CD8-positive, alpha-beta memory T cell (primary cell): ENCODE measurements at regions of chr15 and their contacts with region 1.

Region 1: DNA sequence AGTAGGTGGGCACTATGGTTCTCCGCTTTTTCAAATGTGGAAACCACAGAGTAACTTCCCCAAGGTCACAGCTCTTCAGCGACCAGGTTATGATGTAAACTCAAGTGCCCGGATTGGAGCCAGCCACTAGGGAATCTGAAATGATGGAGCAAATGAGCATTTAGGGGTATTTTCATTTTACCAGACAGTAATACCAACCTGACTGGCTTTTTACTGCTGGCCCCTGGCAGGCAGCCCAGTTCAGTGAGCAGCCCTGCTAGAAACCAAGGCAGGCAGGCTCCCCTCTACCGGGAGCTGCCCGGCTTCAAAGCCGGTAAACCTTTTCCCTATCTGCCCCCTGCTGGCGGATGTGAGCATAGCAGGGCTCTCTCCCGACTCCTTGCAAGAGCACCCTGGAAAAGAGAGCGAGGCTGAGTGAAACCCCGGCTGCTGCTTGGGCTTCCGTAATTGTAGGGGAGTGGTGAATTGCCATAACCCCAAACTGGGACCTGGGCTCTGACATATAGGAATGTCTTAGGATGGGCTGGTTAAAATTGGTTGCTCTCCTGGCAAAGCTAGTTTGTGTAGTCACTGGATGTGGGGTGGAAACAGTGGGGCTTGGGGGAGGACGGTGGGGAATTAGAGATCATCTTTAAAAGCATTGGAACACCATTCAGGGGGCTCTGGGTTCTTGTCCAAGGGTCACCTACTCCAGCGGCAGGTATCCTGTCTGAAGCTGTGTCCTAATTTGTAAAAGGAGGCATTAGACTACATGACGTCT is 98.0 kb upstream of the TNFAIP8L3 start:
- DNase-seq: peak; percentile 13 to 69 (median 44)
- H3K4me3 ChIP-seq: no peak overlapping the region
- H3K4me3 Mint-ChIP-seq: peak overlapping the region in 1 of 7 donors; percentile 28
- H3K27ac ChIP-seq: no peak overlapping the region
- H3K27ac Mint-ChIP-seq: no peak overlapping the region
- H3K4me1 ChIP-seq: no peaks in the 10 kb centered on the region
- H3K4me1 Mint-ChIP-seq: peaks cover 3 to 4% (median 4%) of the 10 kb centered on the region in 3 donors
- H3K27me3 ChIP-seq: no peaks in the 10 kb centered on the region
- H3K27me3 Mint-ChIP-seq: peaks cover 12 to 57% of the 10 kb centered on the region in 2 donors

Region 2: DNA sequence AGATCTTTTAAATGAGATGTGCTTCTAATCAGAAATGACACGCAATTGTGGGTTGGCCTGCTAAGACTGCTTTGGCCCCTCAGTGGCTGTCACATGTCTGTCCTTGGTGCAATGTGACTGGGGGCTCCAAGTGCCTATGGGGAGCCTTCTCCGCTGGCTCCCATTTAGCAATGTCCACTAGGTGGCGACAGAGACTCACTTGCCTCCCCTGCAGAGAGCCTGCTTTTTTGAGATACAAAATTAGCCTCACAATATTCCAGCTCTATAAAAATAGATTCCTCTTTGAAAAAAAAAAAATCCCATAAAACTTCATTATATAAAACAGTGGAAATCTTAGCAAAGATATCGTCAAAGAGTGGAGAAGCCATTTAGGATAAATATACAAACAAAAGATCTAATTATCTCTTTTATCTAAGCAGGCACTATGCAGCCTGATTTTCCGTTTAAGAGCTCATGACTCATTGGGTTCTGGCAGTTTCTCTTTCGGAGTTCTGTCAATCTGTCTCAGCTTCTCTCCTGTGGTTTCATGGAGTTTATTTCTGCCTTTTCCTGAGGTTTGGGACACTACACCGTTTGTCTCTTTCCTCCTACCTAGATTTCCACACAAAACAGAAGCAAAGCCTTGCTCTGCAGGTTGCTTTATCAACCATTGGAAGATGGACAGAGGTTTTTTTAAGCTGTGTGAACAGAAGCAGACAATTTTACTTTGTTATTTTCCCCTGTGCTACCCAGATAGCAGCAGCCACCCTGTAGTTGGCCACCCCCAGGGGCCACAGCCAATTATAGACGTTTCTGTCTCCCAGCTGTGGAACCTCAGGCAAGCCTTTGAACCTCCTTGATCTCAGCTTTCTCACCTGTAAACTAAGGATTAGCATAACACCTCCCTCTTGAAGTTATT is 29.6 kb before region 1 on chr15:
- CTCF ChIA-PET with region 1: interaction called, 11 read pairs
- POLR2A ChIA-PET with region 1: no interaction called
- DNase-seq: peak; percentile 17 to 56 (median 19)
- H3K4me3 ChIP-seq: no peak overlapping the region
- H3K4me3 Mint-ChIP-seq: peak overlapping the region in 1 of 7 donors; percentile 7
- H3K27ac ChIP-seq: no peak overlapping the region
- H3K27ac Mint-ChIP-seq: no peak overlapping the region
- H3K4me1 ChIP-seq: no peaks in the 10 kb centered on the region
- H3K4me1 Mint-ChIP-seq: peaks cover 0 to 3% (median 0%) of the 10 kb centered on the region in 3 donors
- H3K27me3 ChIP-seq: no peaks in the 10 kb centered on the region
- H3K27me3 Mint-ChIP-seq: peaks cover 11 to 20% of the 10 kb centered on the region in 2 donors

Region 3: GRCh38 chr15:51203797-51204196 is 11.1 kb after region 1 on chr15:
- CTCF ChIA-PET with region 1: interaction called, 13 read pairs
- POLR2A ChIA-PET with region 1: no interaction called
- DNase-seq: no peak
- H3K4me3 ChIP-seq: no peak overlapping the region
- H3K4me3 Mint-ChIP-seq: no peak overlapping the region
- H3K27ac ChIP-seq: no peak overlapping the region
- H3K27ac Mint-ChIP-seq: no peak overlapping the region
- H3K4me1 ChIP-seq: no peaks in the 10 kb centered on the region
- H3K4me1 Mint-ChIP-seq: no peaks in the 10 kb centered on the region
- H3K27me3 ChIP-seq: no peaks in the 10 kb centered on the region
- H3K27me3 Mint-ChIP-seq: peaks cover 4 to 23% of the 10 kb centered on the region in 2 donors

Region 4: DNA sequence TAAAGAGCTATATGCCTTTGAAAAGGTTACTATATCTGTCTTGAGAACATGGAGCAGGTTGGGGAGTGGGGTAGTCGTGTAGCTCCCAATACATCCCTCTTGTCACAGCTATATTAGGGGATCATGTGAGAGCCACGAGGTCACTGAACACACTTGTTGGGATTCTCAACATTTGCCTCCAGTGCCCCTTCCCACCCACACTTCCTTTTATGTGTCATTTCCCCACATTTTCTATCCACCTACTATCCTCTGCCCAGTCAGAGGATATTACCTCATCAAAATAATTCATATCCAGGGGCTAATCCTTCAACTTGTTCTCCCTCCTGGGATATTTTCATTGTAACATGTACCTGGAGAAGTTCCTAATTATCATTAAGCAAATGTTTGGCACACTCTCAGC is 60.7 kb after region 1 on chr15:
- CTCF ChIA-PET with region 1: no interaction called
- POLR2A ChIA-PET with region 1: no interaction called
- DNase-seq: no peak
- H3K4me3 ChIP-seq: no peak overlapping the region
- H3K4me3 Mint-ChIP-seq: no peak overlapping the region
- H3K27ac ChIP-seq: no peak overlapping the region
- H3K27ac Mint-ChIP-seq: no peak overlapping the region
- H3K4me1 ChIP-seq: no peaks in the 10 kb centered on the region
- H3K4me1 Mint-ChIP-seq: no peaks in the 10 kb centered on the region
- H3K27me3 ChIP-seq: no peaks in the 10 kb centered on the region
- H3K27me3 Mint-ChIP-seq: peaks cover 5 to 10% of the 10 kb centered on the region in 2 donors